ENCODE measurements at regions of chr20 and their contacts with region 1.

Region 1: GRCh38 chr20:32902456-32903420 is 44.0 kb downstream of the EFCAB8 start:
- H3K4me3 ChIP-seq: no peak overlapping the region
- H3K27ac ChIP-seq: no peak overlapping the region
- H3K4me1 ChIP-seq: no peaks in the 10 kb centered on the region
- CTCF ChIP-seq: peak; percentile 77

Region 2: GRCh38 chr20:32743237-32744112 is 159.3 kb before region 1 on chr20 and contains the start of gene COMMD7:
- CTCF ChIA-PET with region 1: no interaction called
- POLR2A ChIA-PET with region 1: no interaction called
- H3K4me3 ChIP-seq: peak within 1 kb of the TSS; percentile 69
- H3K27ac ChIP-seq: peak within 1 kb of the TSS; percentile 74
- H3K4me1 ChIP-seq: no peaks in the 10 kb centered on the region
- CTCF ChIP-seq: no peak

Region 3: GRCh38 chr20:32945710-32946221 is 43.0 kb after region 1 on chr20:
- CTCF ChIA-PET with region 1: interaction called, 27 read pairs
- POLR2A ChIA-PET with region 1: no interaction called
- H3K4me3 ChIP-seq: no peak overlapping the region
- H3K27ac ChIP-seq: no peak overlapping the region
- H3K4me1 ChIP-seq: no peaks in the 10 kb centered on the region
- CTCF ChIP-seq: no peak

Region 4: GRCh38 chr20:33091693-33092092 is 189.0 kb after region 1 on chr20:
- CTCF ChIA-PET with region 1: interaction called, 34 read pairs
- POLR2A ChIA-PET with region 1: no interaction called
- H3K4me3 ChIP-seq: no peak overlapping the region
- H3K27ac ChIP-seq: no peak overlapping the region
- H3K4me1 ChIP-seq: no peaks in the 10 kb centered on the region
- CTCF ChIP-seq: no peak